Activated CD4-positive, alpha-beta memory T cell treated with anti-CD3 and anti-CD28 coated beads, Interleukin-2, amount 10 ng/mL, durations not matched to agents 7 days and 5 days (primary cell): ENCODE measurements at regions of chr17 and their contacts with region 1.

Region 1: DNA sequence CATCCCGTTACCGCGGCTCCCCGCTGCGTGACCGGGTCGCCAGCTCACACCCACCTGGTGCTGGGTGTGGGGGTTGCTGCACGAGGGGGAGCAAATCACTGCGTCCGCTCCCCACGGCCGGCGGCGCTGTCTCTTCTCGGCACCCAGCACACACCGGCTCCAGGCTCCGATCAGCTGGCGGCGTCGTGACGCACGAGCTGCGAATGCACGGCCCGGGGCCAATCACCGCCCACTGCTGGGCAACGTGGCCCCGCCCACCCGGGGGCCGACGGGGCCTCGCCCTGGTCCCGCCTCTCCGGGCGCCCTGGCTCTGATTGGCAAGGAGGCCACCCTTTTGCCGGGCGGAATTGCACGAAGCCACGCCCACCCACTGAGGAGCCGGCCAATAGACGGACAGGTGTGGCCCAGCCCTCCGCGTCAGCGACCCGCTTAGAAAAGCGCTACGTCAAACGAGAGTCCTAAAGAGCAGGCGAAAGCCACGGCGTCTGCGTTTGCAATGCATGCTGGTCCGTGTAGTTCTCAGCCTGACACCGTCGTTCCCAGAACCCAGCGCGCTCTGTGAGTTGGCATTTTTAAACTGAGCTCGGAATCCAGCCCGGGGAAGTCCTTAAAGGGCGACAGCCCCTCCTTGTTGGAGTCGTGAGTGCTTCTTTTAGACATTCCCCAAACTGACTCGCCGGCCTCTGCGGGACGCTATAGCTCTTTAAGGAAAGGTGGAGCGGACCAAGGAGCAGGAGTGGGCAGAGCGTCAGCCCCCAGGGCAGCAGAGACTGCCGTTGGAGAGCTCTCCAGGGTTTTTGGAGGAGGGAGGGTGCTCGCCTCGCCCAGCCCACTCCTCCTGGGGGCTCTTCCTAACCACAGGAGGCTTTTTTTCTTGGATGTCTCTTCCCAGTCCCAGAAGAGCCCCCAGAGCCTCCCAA is 6.2 kb upstream of the TLCD2 start:
- DNase-seq: peak; percentile 100
- H3K4me3 Mint-ChIP-seq: peak overlapping the region; percentile 91
- H3K27ac Mint-ChIP-seq: peak overlapping the region; percentile 98
- H3K4me1 Mint-ChIP-seq: peaks cover 62% of the 10 kb centered on the region
- H3K27me3 Mint-ChIP-seq: no peaks in the 10 kb centered on the region

Region 2: GRCh38 chr17:1617620-1618174 is 98.6 kb before region 1 on chr17:
- CTCF ChIA-PET with region 1: no interaction called
- POLR2A ChIA-PET with region 1: no interaction called
- DNase-seq: no peak
- H3K4me3 Mint-ChIP-seq: no peak overlapping the region
- H3K27ac Mint-ChIP-seq: no peak overlapping the region
- H3K4me1 Mint-ChIP-seq: peaks cover 7% of the 10 kb centered on the region
- H3K27me3 Mint-ChIP-seq: no peaks in the 10 kb centered on the region

Region 3: GRCh38 chr17:1673041-1673785 is 43.1 kb before region 1 on chr17:
- CTCF ChIA-PET with region 1: interaction called, 20 read pairs
- POLR2A ChIA-PET with region 1: interaction called, 15 read pairs
- DNase-seq: peak; percentile 51
- H3K4me3 Mint-ChIP-seq: no peak overlapping the region
- H3K27ac Mint-ChIP-seq: peak overlapping the region; percentile 70
- H3K4me1 Mint-ChIP-seq: peaks cover 32% of the 10 kb centered on the region
- H3K27me3 Mint-ChIP-seq: no peaks in the 10 kb centered on the region

Region 4: GRCh38 chr17:1764284-1764683 is 47.9 kb after region 1 on chr17:
- CTCF ChIA-PET with region 1: interaction called, 44 read pairs
- POLR2A ChIA-PET with region 1: interaction called, 35 read pairs
- DNase-seq: peak; percentile 81
- H3K4me3 Mint-ChIP-seq: no peak overlapping the region
- H3K27ac Mint-ChIP-seq: peak overlapping the region; percentile 89
- H3K4me1 Mint-ChIP-seq: peaks cover 31% of the 10 kb centered on the region
- H3K27me3 Mint-ChIP-seq: no peaks in the 10 kb centered on the region

Region 5: DNA sequence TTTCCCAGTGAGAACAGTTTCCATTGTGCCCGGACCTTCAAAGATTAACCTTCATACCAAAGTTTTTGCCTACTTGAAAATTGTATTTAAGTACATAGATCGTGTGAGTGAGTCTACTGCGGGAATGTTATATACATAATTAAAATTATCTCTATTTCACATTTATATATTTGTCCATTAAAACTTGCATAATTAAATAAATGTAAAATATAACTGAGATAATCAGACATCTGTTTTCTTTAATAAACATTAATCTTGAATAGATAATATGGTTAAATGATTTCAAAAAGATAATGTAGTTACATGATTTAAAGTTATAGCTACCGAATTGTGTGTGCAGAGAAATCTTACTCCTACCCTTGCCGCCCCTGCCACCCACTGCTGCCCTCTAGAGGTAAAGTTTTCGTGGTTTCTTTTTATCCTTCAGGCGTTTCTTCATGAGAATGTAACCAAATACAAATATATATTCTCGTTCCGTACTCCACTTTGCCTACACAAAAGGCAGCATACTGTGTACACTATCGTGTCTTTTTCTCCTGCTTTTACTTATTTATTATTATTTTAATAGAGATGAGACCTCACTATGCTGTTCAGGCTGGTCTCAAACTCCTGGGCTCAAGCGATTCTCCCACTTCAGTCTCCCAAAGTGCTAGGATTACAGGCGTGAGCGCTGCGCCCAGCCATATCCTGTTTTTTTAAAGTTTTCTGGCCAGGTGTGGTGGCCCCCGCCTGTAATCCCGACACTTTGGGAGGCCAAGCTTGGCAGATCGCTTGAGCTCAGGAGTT is 149.1 kb after region 1 on chr17:
- CTCF ChIA-PET with region 1: interaction called, 22 read pairs
- POLR2A ChIA-PET with region 1: interaction called, 37 read pairs
- DNase-seq: peak; percentile 63
- H3K4me3 Mint-ChIP-seq: no peak overlapping the region
- H3K27ac Mint-ChIP-seq: no peak overlapping the region
- H3K4me1 Mint-ChIP-seq: peaks cover 21% of the 10 kb centered on the region
- H3K27me3 Mint-ChIP-seq: no peaks in the 10 kb centered on the region

Region 6: DNA sequence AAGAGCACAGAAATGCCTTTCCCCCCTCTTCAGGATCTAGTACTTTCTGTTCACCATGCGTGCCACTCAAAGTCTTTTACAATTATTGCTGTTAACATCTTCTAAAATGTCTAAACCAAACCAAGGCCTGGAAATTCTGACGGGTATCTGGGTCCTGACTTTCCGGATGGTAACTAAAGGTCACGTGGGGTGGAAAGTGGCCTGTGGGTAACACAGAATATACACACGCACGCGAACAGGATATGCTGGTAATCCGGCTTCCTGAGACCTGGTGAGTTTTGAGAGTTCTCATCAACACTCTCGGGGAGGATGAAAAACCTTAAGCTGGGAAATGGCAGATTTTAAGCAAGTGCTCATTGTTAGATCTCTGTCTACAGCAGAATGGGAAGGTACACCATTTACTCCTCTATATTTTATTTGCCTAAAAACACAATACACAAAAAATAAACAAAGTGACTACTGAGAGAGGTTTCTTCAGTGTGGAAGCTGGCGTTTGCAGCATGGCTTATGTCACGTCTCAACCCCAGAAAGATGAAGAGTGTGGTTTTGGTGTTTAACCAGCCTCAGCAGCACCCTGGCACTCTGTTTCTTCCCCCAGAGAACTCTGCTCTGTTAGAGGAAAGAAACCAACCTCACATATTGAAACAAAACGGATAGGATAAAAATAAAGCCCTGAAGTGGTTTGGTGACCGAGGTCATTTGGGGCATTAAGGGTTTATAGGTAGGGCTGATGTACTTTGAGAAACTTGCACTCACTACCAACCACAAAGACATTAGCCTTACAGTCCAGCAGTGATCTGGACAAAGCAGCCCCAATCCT is 549.9 kb after region 1 on chr17:
- CTCF ChIA-PET with region 1: no interaction called
- POLR2A ChIA-PET with region 1: interaction called, 10 read pairs
- DNase-seq: peak; percentile 94
- H3K4me3 Mint-ChIP-seq: peak overlapping the region; percentile 79
- H3K27ac Mint-ChIP-seq: peak overlapping the region; percentile 100
- H3K4me1 Mint-ChIP-seq: peaks cover 80% of the 10 kb centered on the region
- H3K27me3 Mint-ChIP-seq: no peaks in the 10 kb centered on the region